BJ (cell line): ENCODE measurements at regions of chr4 and their contacts with region 1.

Region 1: DNA sequence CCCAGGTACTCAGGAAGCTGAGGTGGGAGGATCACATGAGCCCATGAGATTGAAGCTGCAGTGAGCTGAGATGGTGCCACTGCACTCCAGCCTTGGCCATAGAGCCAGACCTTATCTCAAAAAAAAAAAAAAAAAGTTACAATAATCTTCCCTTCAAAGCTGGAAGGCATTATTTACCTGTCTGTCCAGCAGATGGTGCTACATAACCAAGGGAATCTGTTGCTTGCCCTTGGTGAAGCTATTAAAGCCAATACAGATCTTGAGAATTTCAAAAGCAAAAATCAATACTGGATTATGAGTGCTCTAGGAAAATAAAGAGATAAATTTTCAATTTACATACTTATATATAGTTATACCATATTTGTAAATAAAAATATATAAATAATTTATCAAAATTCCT is 25.9 kb downstream of the PKD2 start:
- DNase-seq: no peak
- H3K4me3 ChIP-seq: no peak overlapping the region
- H3K27me3 ChIP-seq: no peaks in the 10 kb centered on the region
- CTCF ChIP-seq: peak; percentile 66

Region 2: DNA sequence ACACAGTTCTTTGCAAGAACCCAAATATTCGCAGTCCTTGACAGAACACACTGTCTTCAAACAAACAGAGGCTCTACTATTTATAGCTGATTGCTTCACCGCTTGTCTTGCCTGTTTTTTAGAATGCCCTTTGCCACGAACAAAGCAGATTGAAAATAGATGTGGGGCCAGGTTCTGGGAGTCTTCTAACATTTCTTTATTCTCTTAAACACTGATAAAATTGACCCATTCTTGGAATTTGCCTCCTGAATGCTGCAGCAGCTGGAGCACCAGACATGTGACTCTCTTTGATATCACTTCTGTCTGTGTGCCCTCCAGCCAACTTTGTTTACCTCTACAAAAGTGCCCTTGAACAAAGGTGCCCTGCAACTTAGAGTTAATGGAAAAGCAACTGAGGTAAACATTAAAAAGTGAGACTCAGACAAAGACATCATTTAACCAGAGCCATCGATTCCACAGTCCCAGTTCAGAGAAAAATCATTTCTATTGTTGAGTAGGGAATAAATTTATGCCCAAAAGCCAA is 122.0 kb before region 1 on chr4:
- CTCF ChIA-PET with region 1: no interaction called
- POLR2A ChIA-PET with region 1: no interaction called
- DNase-seq: no peak
- H3K4me3 ChIP-seq: no peak overlapping the region
- H3K27me3 ChIP-seq: peaks cover 12% of the 10 kb centered on the region
- CTCF ChIP-seq: no peak

Region 3: DNA sequence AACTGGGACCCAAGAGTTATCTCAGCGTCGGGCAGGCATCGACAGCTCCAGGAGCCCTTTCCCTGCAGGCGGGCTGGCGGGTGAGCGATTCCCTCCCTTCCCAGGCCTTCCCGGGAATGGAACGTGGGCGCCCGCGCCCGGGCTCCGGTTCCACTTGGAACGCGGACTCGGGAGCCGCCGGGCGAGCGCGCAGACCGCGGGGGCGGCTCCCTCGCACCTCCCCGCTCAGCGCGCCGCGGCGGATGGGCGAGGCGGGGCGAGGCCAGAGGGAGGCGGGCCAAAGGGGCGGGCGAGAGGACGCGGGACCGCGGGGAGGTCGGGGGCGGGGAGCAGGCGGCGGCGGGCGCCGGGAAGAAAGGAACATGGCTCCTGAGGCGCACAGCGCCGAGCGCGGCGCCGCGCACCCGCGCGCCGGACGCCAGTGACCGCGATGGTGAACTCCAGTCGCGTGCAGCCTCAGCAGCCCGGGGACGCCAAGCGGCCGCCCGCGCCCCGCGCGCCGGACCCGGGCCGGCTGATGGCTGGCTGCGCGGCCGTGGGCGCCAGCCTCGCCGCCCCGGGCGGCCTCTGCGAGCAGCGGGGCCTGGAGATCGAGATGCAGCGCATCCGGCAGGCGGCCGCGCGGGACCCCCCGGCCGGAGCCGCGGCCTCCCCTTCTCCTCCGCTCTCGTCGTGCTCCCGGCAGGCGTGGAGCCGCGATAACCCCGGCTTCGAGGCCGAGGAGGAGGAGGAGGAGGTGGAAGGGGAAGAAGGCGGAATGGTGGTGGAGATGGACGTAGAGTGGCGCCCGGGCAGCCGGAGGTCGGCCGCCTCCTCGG is 25.8 kb before region 1 on chr4 and contains the start of gene PKD2:
- CTCF ChIA-PET with region 1: interaction called, 12 read pairs
- POLR2A ChIA-PET with region 1: no interaction called
- DNase-seq: no peak
- H3K4me3 ChIP-seq: peak within 1 kb of the TSS; percentile 88
- H3K27me3 ChIP-seq: no peaks in the 10 kb centered on the region
- CTCF ChIP-seq: no peak
- polyA plus RNA-seq, gene PKD2: 67.0 and 121 TPM in 2 replicates

Region 4: DNA sequence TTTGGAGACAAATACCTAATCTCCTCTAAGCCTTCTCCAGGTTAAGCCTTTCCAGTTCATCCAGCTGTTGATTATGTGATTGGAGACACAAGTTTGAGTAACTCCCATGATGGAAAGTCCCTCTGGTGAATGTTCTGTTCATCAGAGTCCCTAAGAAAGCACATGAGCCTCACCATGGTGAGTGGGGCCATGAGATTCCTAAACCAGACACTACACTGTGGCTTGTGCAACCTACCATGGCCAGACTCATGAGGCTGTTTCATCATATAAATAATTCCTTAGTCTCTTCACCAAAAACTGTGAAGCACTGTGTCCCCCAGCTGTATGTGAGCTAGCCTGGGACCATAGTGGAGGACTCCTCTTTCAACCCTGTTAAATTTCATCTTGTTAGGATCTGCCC is 11.5 kb before region 1 on chr4:
- CTCF ChIA-PET with region 1: interaction called, 12 read pairs
- POLR2A ChIA-PET with region 1: no interaction called
- DNase-seq: no peak
- H3K4me3 ChIP-seq: no peak overlapping the region
- H3K27me3 ChIP-seq: no peaks in the 10 kb centered on the region
- CTCF ChIP-seq: no peak

Region 5: DNA sequence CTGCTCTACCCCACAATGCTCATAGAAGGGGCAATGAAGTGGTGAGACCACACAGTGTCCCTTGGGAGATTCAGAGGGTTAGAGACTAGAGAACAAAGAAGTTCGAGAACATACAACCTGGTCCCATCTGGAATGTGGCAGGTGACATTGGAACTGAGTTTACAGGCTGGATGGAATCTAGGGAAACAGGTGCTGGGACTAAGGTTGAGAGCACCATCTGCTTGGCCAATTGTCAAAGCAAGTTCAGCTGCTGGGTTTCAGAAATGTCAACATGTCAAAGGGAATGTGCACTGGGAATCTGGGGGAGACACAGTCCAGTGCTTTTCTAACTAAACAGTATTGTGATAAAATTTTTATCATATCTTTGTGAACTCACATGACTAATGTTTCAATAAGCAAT is 1039.6 kb after region 1 on chr4:
- CTCF ChIA-PET with region 1: no interaction called
- POLR2A ChIA-PET with region 1: no interaction called
- DNase-seq: no peak
- H3K4me3 ChIP-seq: no peak overlapping the region
- H3K27me3 ChIP-seq: no peaks in the 10 kb centered on the region
- CTCF ChIP-seq: no peak